CD14-positive monocyte (primary cell): ENCODE measurements at regions of chr4 and their contacts with region 1.

Region 1: GRCh38 chr4:184417802-184418511 is 56.4 kb downstream of the IRF2 start:
- DNase-seq: peak; percentile 69 to 92 (median 89)
- H3K4me3 ChIP-seq: peak overlapping the region in 1 of 3 experiments; percentile 66
- H3K4me3 Mint-ChIP-seq: peak overlapping the region in 1 of 2 donors; percentile 75
- H3K27ac ChIP-seq: peak overlapping the region; percentile 73 to 91
- H3K27ac Mint-ChIP-seq: peak overlapping the region; percentile 93 to 98 (median 96)
- H3K4me1 ChIP-seq: peaks cover 53 to 64% of the 10 kb centered on the region in 2 donors
- H3K4me1 Mint-ChIP-seq: peaks cover 63% of the 10 kb centered on the region
- H3K27me3 ChIP-seq: no peaks in the 10 kb centered on the region
- H3K27me3 Mint-ChIP-seq: no peaks in the 10 kb centered on the region
- CTCF ChIP-seq: no peak

Region 2: DNA sequence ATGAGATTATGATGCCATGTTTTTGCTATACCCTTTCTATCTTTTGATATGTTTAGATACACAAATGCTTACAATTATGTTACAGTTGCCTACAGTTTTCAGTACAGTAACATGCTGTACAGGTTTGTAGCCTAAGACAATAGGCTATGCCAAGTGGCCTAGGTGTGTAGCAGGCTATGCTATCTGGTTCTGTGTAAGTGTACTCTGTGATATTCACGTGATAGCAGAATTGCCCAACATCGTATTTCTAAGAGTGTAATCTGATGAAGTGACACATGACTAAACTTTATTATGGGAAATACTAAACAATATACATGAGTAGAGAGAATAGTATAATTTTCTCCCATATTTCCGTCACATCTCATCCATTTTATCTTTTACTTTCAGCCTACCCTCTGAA is 1194.9 kb before region 1 on chr4:
- intact Hi-C with region 1: no loop called
- DNase-seq: no peak
- H3K4me3 ChIP-seq: no peak overlapping the region
- H3K4me3 Mint-ChIP-seq: no peak overlapping the region
- H3K27ac ChIP-seq: no peak overlapping the region
- H3K27ac Mint-ChIP-seq: no peak overlapping the region
- H3K4me1 ChIP-seq: no peaks in the 10 kb centered on the region
- H3K4me1 Mint-ChIP-seq: no peaks in the 10 kb centered on the region
- H3K27me3 ChIP-seq: no peaks in the 10 kb centered on the region
- H3K27me3 Mint-ChIP-seq: no peaks in the 10 kb centered on the region
- CTCF ChIP-seq: no peak

Region 3: GRCh38 chr4:183977707-183978106 is 440.2 kb before region 1 on chr4:
- intact Hi-C with region 1: no loop called
- DNase-seq: no peak
- H3K4me3 ChIP-seq: no peak overlapping the region
- H3K4me3 Mint-ChIP-seq: no peak overlapping the region
- H3K27ac ChIP-seq: no peak overlapping the region
- H3K27ac Mint-ChIP-seq: no peak overlapping the region
- H3K4me1 ChIP-seq: no peaks in the 10 kb centered on the region
- H3K4me1 Mint-ChIP-seq: no peaks in the 10 kb centered on the region
- H3K27me3 ChIP-seq: no peaks in the 10 kb centered on the region
- H3K27me3 Mint-ChIP-seq: peaks cover 0 to 2% (median 0%) of the 10 kb centered on the region in 3 donors
- CTCF ChIP-seq: no peak

Region 4: GRCh38 chr4:184375027-184375426 is 42.9 kb before region 1 on chr4:
- intact Hi-C with region 1: loop called in 1 of 2 experiments (anchors 5 kb)
- DNase-seq: peak in 2 of 3 donors; percentile 40 to 69
- H3K4me3 ChIP-seq: no peak overlapping the region
- H3K4me3 Mint-ChIP-seq: no peak overlapping the region
- H3K27ac ChIP-seq: peak overlapping the region in 1 of 2 donors; percentile 11
- H3K27ac Mint-ChIP-seq: peak overlapping the region in 2 of 7 donors; percentile 85 to 88
- H3K4me1 ChIP-seq: peaks cover 9 to 14% of the 10 kb centered on the region in 2 donors
- H3K4me1 Mint-ChIP-seq: peaks cover 22% of the 10 kb centered on the region
- H3K27me3 ChIP-seq: no peaks in the 10 kb centered on the region
- H3K27me3 Mint-ChIP-seq: no peaks in the 10 kb centered on the region
- CTCF ChIP-seq: no peak

Region 5: DNA sequence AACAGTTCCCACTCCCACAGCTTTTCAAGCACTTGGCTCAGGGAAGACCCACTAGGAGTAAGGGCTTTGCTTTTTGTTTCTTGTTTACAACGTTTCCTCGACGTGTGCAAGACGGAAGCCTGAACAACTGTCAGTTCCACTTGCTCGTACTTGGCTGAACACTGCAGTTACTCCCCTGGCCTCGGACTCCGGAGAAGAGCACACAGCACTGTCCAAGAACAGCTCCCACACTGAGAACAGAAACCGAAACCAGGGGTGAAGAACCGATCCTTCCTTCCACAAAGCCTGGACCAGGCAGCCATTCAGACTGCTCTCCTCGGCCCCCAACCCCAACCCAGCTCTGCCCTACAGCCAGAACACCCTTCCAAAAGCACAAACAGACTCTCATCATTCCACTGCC is 30.9 kb after region 1 on chr4:
- intact Hi-C with region 1: no loop called
- DNase-seq: peak in 2 of 3 donors; percentile 50 to 61
- H3K4me3 ChIP-seq: peak overlapping the region; percentile 32 to 71 (median 46)
- H3K4me3 Mint-ChIP-seq: peak overlapping the region; percentile 85 to 93
- H3K27ac ChIP-seq: peak overlapping the region; percentile 71 to 76
- H3K27ac Mint-ChIP-seq: peak overlapping the region; percentile 94 to 98 (median 96)
- H3K4me1 ChIP-seq: peaks cover 67 to 82% of the 10 kb centered on the region in 2 donors
- H3K4me1 Mint-ChIP-seq: peaks cover 88% of the 10 kb centered on the region
- H3K27me3 ChIP-seq: no peaks in the 10 kb centered on the region
- H3K27me3 Mint-ChIP-seq: no peaks in the 10 kb centered on the region
- CTCF ChIP-seq: no peak

Region 6: GRCh38 chr4:184500748-184501589 is 83.0 kb after region 1 on chr4:
- intact Hi-C with region 1: no loop called
- DNase-seq: no peak
- H3K4me3 ChIP-seq: no peak overlapping the region
- H3K4me3 Mint-ChIP-seq: no peak overlapping the region
- H3K27ac ChIP-seq: no peak overlapping the region
- H3K27ac Mint-ChIP-seq: peak overlapping the region in 1 of 7 donors; percentile 0
- H3K4me1 ChIP-seq: peaks cover 16 to 17% of the 10 kb centered on the region in 2 donors
- H3K4me1 Mint-ChIP-seq: peaks cover 24% of the 10 kb centered on the region
- H3K27me3 ChIP-seq: no peaks in the 10 kb centered on the region
- H3K27me3 Mint-ChIP-seq: peaks cover 0 to 4% (median 1%) of the 10 kb centered on the region in 3 donors
- CTCF ChIP-seq: no peak

Region 7: DNA sequence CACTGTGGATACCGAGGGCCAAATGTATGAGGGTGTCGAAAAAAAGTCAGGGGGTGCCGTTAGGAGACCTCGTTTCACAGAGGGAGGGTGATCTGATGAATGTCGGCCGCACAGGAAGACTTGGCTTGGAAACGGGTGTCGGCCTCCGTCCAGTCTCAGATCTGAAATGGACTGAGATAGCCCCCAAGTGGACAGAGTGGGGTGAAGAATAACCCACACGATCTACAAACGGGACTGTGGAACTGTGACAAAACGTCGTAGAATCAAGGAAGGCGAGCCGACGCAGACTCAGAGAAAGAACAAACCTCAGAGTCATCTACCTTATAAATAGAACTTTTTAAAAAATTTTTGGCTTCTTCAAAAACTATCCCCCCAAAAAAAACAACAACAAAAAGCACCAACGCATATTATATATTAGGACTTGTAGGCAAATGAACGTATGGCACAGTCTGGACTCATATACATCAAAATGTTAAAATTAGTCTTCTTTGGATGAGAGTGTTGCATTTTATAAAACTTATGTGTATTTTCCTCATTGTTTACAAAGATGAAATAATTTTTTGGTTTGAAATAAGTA is 120.2 kb after region 1 on chr4:
- intact Hi-C with region 1: loop called in 1 of 2 experiments (anchors 10 kb)
- DNase-seq: peak; percentile 88 to 92 (median 92)
- H3K4me3 ChIP-seq: peak overlapping the region; percentile 79 to 96 (median 79)
- H3K4me3 Mint-ChIP-seq: peak overlapping the region; percentile 89 to 93
- H3K27ac ChIP-seq: peak overlapping the region; percentile 96 to 99
- H3K27ac Mint-ChIP-seq: peak overlapping the region; percentile 99 to 100 (median 100)
- H3K4me1 ChIP-seq: peaks cover 30 to 36% of the 10 kb centered on the region in 2 donors
- H3K4me1 Mint-ChIP-seq: peaks cover 46% of the 10 kb centered on the region
- H3K27me3 ChIP-seq: no peaks in the 10 kb centered on the region
- H3K27me3 Mint-ChIP-seq: peaks cover 0 to 5% (median 3%) of the 10 kb centered on the region in 3 donors
- CTCF ChIP-seq: peak; percentile 77